CD4-positive, alpha-beta T cell (primary cell): ENCODE measurements at regions of chr5 and their contacts with region 1.

Region 1: GRCh38 chr5:179678223-179679013 is 2.4 kb downstream of the CBY3 start:
- DNase-seq: peak; percentile 83 to 98 (median 92)
- ATAC-seq: peak; percentile 86
- H3K4me3 ChIP-seq: peak overlapping the region; percentile 99
- H3K4me3 Mint-ChIP-seq: peak overlapping the region; percentile 97
- H3K27ac ChIP-seq: peak overlapping the region; percentile 83 to 85
- H3K27ac Mint-ChIP-seq: peak overlapping the region; percentile 98
- H3K4me1 ChIP-seq: peaks cover 36% of the 10 kb centered on the region
- H3K4me1 Mint-ChIP-seq: peaks cover 35% of the 10 kb centered on the region
- H3K27me3 ChIP-seq: no peaks in the 10 kb centered on the region
- H3K27me3 Mint-ChIP-seq: no peaks in the 10 kb centered on the region
- CTCF ChIP-seq: no peak

Region 2: DNA sequence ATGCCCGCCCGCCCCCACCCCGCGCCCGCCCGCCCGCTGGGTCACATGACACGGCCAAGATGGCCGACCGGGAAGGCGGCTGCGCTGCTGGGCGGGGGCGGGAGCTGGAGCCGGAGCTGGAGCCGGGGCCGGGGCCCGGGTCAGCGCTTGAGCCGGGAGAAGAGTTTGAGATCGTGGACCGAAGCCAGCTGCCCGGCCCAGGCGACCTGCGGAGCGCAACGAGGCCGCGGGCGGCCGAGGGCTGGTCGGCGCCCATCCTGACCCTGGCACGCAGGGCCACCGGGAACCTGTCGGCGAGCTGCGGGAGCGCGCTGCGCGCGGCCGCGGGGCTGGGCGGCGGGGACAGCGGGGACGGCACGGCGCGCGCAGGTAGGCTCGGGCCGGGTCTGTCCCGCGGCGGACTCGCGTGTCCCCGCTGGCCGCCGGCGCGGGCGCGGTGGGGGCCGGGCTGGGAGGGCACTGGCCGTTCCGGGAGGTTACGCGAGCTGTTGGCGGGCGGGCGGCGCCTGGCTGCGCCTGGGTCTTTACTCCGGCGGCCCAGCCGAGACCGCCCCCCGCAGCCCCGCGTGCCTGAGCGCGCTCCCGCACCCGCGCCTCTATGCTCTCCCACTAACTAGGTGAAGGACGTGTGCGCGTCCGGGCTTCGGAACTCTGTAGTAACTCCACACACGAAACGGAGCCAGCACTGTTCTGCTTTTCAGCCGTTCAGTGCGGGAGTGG is 127.7 kb before region 1 on chr5 and contains the start of gene RUFY1:
- CTCF ChIA-PET with region 1: no interaction called
- POLR2A ChIA-PET with region 1: interaction called, 6 read pairs
- intact Hi-C with region 1: loop called in 1 of 2 experiments (anchors 5 kb)
- DNase-seq: peak; percentile 63 to 91 (median 79)
- ATAC-seq: peak; percentile 76
- H3K4me3 ChIP-seq: peak within 1 kb of the TSS; percentile 91
- H3K4me3 Mint-ChIP-seq: peak within 1 kb of the TSS; percentile 99
- H3K27ac ChIP-seq: peak within 1 kb of the TSS; percentile 74 to 77
- H3K27ac Mint-ChIP-seq: peak within 1 kb of the TSS; percentile 97
- H3K4me1 ChIP-seq: peaks cover 37% of the 10 kb centered on the region
- H3K4me1 Mint-ChIP-seq: peaks cover 37% of the 10 kb centered on the region
- H3K27me3 ChIP-seq: no peaks in the 10 kb centered on the region
- H3K27me3 Mint-ChIP-seq: no peaks in the 10 kb centered on the region
- CTCF ChIP-seq: no peak
- total RNA-seq, gene RUFY1: 19.5 to 21.8 TPM

Region 3: GRCh38 chr5:179697993-179698934 is 19.8 kb after region 1 on chr5:
- CTCF ChIA-PET with region 1: interaction called, 4 read pairs
- POLR2A ChIA-PET with region 1: interaction called, 22 read pairs
- intact Hi-C with region 1: loop called (anchors 1 kb)
- DNase-seq: peak; percentile 97 to 100 (median 98)
- ATAC-seq: peak; percentile 86
- H3K4me3 ChIP-seq: peak overlapping the region; percentile 93
- H3K4me3 Mint-ChIP-seq: peak overlapping the region; percentile 95
- H3K27ac ChIP-seq: peak overlapping the region; percentile 83 to 94
- H3K27ac Mint-ChIP-seq: peak overlapping the region; percentile 98
- H3K4me1 ChIP-seq: peaks cover 49% of the 10 kb centered on the region
- H3K4me1 Mint-ChIP-seq: peaks cover 47% of the 10 kb centered on the region
- H3K27me3 ChIP-seq: no peaks in the 10 kb centered on the region
- H3K27me3 Mint-ChIP-seq: no peaks in the 10 kb centered on the region
- CTCF ChIP-seq: no peak